AG04450 (cell line): ENCODE measurements at regions of chr11 and their contacts with region 1.

Region 1: GRCh38 chr11:13152736-13153533 is 124.7 kb upstream of the BMAL1 start:
- DNase-seq: no peak
- H3K4me3 ChIP-seq: no peak overlapping the region
- H3K27ac ChIP-seq: no peak overlapping the region
- H3K27me3 ChIP-seq: peaks cover 4% of the 10 kb centered on the region
- CTCF ChIP-seq: peak; percentile 64

Region 2: DNA sequence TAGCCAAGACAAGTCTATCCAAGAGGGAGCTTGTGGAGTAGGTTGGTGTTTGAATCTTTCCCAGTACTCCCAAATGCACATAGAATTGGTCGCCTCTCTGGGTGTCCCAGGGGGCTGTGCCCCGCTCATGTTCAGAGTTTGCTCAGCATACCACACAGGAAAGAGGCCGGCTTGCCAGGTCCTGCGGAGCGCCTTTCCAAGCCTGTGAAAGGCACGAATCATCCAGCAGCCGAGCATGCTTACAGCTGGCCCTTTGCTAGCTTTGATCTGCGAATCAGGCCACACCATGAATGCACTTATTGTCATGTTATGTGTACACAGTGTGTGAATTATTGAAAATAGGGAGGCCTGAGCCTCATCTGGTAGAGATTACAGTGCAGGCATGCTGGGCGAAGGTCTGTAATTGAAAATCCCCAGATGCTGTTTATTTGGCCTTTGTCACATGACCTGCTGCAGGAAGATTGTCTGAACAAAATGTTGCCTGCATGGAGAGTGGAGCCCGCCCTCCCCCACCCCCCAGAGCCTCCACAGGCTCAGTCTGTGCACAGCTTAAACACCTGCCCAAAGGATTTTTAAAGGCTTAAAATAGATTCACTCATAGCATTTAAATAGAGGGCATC is 307.1 kb before region 1 on chr11:
- CTCF ChIA-PET with region 1: no interaction called
- POLR2A ChIA-PET with region 1: no interaction called
- DNase-seq: peak; percentile 65
- H3K4me3 ChIP-seq: no peak overlapping the region
- H3K27ac ChIP-seq: peak overlapping the region; percentile 66
- H3K27me3 ChIP-seq: no peaks in the 10 kb centered on the region
- CTCF ChIP-seq: no peak

Region 3: DNA sequence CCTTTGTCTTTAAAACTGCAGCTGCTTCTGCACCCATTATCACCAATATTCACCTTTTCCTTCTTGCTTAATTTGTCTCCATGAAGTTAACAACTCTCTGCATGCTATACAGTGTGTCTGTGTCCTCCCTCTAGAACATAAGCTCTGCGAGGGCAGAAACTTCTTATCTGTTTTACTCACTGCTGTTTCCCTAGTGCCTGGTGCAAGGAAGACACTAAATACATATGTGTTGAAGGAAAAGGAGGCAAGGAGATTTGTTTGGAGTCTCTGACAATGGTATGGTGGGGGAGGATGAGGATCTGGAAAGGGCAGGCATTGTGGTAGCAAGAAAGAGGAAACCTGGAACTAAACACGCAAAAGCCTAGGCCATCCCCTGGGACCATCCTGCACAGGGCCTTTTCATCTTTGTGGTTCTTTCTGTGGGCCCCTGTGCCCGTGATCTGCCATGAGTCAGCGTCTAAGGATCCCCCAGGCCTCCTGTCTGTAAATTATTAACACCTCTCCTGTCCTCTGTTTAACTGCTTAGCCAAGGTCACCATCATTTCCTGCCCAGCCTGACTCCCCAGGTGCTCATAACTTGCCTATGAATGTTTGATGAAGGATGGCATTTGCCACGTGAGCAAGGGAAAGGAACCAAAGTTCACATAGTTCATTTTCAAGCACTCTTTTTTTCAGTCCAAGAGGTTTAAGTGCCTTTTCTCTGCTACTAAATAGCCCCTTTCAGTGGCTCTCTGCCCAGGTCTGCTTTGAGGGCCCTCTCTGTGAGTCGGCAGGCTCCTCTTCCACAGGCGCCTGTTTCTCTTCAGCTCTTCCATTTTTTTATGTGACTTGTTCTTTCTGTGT is 12.7 kb before region 1 on chr11:
- CTCF ChIA-PET with region 1: interaction called, 11 read pairs
- POLR2A ChIA-PET with region 1: no interaction called
- DNase-seq: no peak
- H3K4me3 ChIP-seq: no peak overlapping the region
- H3K27ac ChIP-seq: no peak overlapping the region
- H3K27me3 ChIP-seq: peaks cover 2% of the 10 kb centered on the region
- CTCF ChIP-seq: no peak